ENCODE measurements at regions of chr1 and their contacts with region 1.

Region 1: GRCh38 chr1:24635195-24635843 is 7.8 kb upstream of the SRRM1 start:
- DNase-seq: peak; percentile 61
- H3K4me3 ChIP-seq: no peak overlapping the region
- H3K27ac ChIP-seq: no peak overlapping the region
- H3K4me1 ChIP-seq: no peaks in the 10 kb centered on the region
- H3K27me3 ChIP-seq: no peaks in the 10 kb centered on the region
- CTCF ChIP-seq: peak; percentile 58 to 72

Region 2: DNA sequence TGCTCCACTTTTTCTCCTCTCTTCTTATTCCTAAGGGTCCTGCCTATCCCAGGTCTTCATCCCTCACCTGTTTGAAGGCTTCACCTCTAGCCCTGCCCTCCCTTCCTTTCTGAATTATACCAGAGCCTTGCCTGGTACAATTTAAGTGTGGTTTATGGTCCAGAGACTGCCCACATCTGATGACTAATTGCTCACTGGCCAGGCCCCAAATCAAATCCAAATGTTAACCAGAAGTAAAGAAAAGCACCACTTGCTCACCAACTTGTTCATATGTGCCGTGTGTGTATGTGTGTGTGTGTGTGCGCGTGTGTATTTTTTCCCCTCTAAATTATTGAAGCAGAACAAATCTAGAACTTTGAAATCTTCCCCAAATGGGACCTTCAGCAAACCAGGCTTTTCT is 549.8 kb before region 1 on chr1:
- CTCF ChIA-PET with region 1: no interaction called
- dilution Hi-C with region 1: loop called (anchors 10 kb)
- in situ Hi-C with region 1: no loop called
- intact Hi-C with region 1: no loop called
- DNase-seq: peak; percentile 36
- H3K4me3 ChIP-seq: no peak overlapping the region
- H3K27ac ChIP-seq: no peak overlapping the region
- H3K4me1 ChIP-seq: no peaks in the 10 kb centered on the region
- H3K27me3 ChIP-seq: no peaks in the 10 kb centered on the region
- CTCF ChIP-seq: no peak

Region 3: GRCh38 chr1:24391882-24392603 is 243.3 kb before region 1 on chr1:
- CTCF ChIA-PET with region 1: no interaction called
- dilution Hi-C with region 1: no loop called
- in situ Hi-C with region 1: no loop called
- intact Hi-C with region 1: loop called (anchors 1 kb)
- DNase-seq: peak; percentile 50
- H3K4me3 ChIP-seq: peak overlapping the region in 2 of 3 experiments; percentile 14 to 24
- H3K27ac ChIP-seq: peak overlapping the region; percentile 76
- H3K4me1 ChIP-seq: peaks cover 28% of the 10 kb centered on the region
- H3K27me3 ChIP-seq: no peaks in the 10 kb centered on the region
- CTCF ChIP-seq: peak; percentile 87 to 90

Region 4: DNA sequence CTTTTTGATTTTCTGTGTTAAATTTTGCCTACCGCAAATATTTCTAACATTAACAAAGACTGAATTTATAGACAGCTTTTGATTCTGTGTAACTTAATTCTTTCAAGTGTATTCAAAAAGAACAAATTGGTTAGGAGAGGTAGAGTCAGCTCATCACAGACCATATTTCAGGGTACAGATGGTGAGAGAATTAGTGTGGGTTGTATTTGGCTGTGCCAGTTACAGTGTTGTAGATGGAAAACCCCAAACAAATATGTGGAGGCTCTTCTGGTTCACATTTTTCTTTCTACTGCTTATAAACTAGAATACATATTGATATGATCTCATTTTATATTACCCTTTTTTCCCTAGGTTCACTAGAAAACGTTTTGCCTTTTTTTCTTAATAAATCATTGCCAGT is 121.6 kb before region 1 on chr1:
- CTCF ChIA-PET with region 1: no interaction called
- dilution Hi-C with region 1: loop called (anchors 10 kb)
- in situ Hi-C with region 1: no loop called
- intact Hi-C with region 1: no loop called
- DNase-seq: no peak
- H3K4me3 ChIP-seq: no peak overlapping the region
- H3K27ac ChIP-seq: no peak overlapping the region
- H3K4me1 ChIP-seq: peaks cover 12% of the 10 kb centered on the region
- H3K27me3 ChIP-seq: no peaks in the 10 kb centered on the region
- CTCF ChIP-seq: no peak

Region 5: DNA sequence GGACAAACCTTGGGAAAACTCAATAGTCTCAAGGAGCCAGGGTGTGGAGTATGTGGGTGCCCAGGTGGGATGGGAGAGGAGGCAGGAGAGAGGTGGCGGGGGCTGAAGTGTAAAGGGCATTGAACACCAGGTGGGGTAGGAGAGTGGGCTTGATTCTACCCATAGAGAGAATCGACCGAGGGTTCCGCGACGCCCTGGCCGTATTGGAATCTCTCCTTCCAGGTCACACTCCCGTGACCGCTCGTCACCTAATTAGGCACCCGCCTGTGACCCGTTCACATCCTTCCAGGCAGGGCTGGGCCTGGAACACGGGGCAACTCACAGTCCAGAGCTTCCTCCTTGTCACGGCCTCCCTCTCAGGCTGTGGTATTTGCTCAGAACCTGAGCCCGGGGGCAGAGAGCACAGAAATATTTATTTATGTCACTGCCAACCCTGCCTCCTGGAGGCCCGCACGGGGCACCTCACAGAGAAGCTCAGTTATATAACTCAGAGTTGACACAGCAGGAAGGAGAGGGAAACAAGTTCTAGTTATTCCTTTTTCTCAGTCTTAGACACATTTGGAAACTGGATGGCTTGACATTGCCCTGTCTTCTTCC is 67.4 kb before region 1 on chr1:
- CTCF ChIA-PET with region 1: no interaction called
- dilution Hi-C with region 1: loop called (anchors 10 kb)
- in situ Hi-C with region 1: no loop called
- intact Hi-C with region 1: no loop called
- DNase-seq: peak; percentile 11
- H3K4me3 ChIP-seq: no peak overlapping the region
- H3K27ac ChIP-seq: no peak overlapping the region
- H3K4me1 ChIP-seq: peaks cover 18% of the 10 kb centered on the region
- H3K27me3 ChIP-seq: no peaks in the 10 kb centered on the region
- CTCF ChIP-seq: peak in 1 of 2 donors; percentile 28

Region 6: DNA sequence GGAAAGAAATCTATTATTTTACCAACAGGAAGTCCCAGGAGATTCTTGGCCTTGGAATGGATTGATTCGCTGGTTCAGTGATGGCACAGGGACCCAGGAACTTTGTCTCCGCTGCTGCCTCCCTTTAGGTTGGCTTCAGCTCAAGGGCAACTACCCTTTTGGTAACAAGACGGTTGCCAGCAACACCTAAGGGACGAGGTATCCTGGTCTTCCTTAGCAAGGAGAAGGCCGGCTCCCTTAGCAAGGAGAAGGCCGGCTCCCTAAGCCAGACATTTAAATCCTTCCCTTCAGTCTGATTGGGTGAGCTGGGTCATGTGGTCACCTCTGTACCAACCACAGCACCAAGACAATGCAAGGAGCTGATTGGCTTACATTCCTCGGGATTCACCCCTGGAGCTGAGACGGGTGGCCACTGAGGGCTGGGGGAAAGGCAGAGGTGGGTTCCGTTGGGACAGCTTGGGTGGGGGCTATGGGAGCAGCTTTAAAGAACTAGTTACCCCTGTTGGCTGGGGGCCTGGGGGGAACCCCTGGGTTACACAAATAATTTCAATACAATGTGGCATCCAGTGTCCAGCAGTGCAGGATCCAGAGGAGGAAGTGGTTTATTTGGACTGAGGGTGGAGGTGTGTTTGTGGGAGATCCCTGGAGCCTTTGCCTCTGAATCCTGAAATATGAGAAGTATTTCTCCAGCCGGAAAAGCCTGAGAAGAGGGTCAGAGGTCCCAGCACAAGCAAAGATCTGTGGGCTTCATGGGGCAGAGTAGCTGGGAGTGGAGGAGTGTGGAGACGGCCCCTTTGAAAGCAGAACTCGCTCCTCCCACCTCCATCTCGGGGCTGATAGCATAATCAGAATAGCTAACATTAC is 89.3 kb after region 1 on chr1:
- CTCF ChIA-PET with region 1: no interaction called
- dilution Hi-C with region 1: no loop called
- in situ Hi-C with region 1: no loop called
- intact Hi-C with region 1: no loop called
- DNase-seq: peak; percentile 38
- H3K4me3 ChIP-seq: no peak overlapping the region
- H3K27ac ChIP-seq: no peak overlapping the region
- H3K4me1 ChIP-seq: peaks cover 23% of the 10 kb centered on the region
- H3K27me3 ChIP-seq: no peaks in the 10 kb centered on the region
- CTCF ChIP-seq: no peak

Region 7: DNA sequence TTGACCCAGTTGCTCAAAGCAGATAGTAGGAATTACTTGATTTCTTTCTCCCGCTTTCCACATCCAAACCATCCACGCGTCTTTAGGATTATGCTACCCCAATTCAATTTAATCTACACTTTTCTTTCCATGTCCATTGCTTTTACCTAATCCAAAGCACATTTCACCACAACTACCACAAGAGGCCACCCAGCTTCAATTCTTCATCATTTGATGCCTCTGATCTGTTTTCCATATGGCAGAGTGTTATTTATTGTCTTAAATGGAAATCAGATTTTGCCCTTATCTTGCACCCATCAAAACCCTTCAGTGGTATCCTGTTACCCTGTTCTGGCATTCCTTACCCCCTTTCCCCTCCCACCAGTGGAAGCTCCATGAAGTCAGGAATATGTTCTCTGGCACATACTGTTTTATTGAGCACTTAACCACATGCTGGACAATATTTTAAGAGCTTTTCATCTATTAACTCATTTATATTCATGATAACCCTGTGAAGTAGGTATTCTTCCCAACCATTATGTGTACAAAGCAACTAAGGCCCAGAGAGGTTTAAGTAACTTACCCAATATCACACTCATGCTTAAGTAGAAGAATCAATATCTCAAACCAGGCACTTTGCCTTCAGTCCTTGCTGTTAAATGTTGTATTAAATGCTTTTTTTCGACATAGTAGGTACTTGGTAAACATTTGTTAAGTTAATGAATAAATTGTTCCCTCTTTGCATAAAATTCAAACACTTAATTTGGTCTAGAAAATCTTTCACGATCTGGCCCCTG is 144.6 kb after region 1 on chr1:
- CTCF ChIA-PET with region 1: no interaction called
- dilution Hi-C with region 1: no loop called
- in situ Hi-C with region 1: no loop called
- intact Hi-C with region 1: no loop called
- DNase-seq: no peak
- H3K4me3 ChIP-seq: no peak overlapping the region
- H3K27ac ChIP-seq: no peak overlapping the region
- H3K4me1 ChIP-seq: peaks cover 6% of the 10 kb centered on the region
- H3K27me3 ChIP-seq: no peaks in the 10 kb centered on the region
- CTCF ChIP-seq: no peak

Region 8: GRCh38 chr1:24872061-24872850 is 236.9 kb after region 1 on chr1:
- CTCF ChIA-PET with region 1: no interaction called
- dilution Hi-C with region 1: no loop called
- in situ Hi-C with region 1: no loop called
- intact Hi-C with region 1: no loop called
- DNase-seq: no peak
- H3K4me3 ChIP-seq: no peak overlapping the region
- H3K27ac ChIP-seq: no peak overlapping the region
- H3K4me1 ChIP-seq: no peaks in the 10 kb centered on the region
- H3K27me3 ChIP-seq: no peaks in the 10 kb centered on the region
- CTCF ChIP-seq: no peak

Region 9: GRCh38 chr1:25073640-25074270 is 438.4 kb after region 1 on chr1:
- CTCF ChIA-PET with region 1: no interaction called
- dilution Hi-C with region 1: no loop called
- in situ Hi-C with region 1: no loop called
- intact Hi-C with region 1: no loop called
- DNase-seq: no peak
- H3K4me3 ChIP-seq: no peak overlapping the region
- H3K27ac ChIP-seq: no peak overlapping the region
- H3K4me1 ChIP-seq: no peaks in the 10 kb centered on the region
- H3K27me3 ChIP-seq: no peaks in the 10 kb centered on the region
- CTCF ChIP-seq: no peak

Region 10: GRCh38 chr1:25194572-25195020 is 559.3 kb after region 1 on chr1:
- CTCF ChIA-PET with region 1: interaction called, 18 read pairs
- dilution Hi-C with region 1: no loop called
- in situ Hi-C with region 1: no loop called
- intact Hi-C with region 1: no loop called
- DNase-seq: peak; percentile 92
- H3K4me3 ChIP-seq: no peak overlapping the region
- H3K27ac ChIP-seq: peak overlapping the region; percentile 52
- H3K4me1 ChIP-seq: peaks cover 40% of the 10 kb centered on the region
- H3K27me3 ChIP-seq: no peaks in the 10 kb centered on the region
- CTCF ChIP-seq: no peak